SK-N-SH (cell line): ENCODE measurements at regions of chr11 and their contacts with region 1.

Region 1: GRCh38 chr11:117538263-117539135 is 210.8 kb downstream of the CEP164 start:
- DNase-seq: peak; percentile 76
- H3K4me3 ChIP-seq: no peak overlapping the region
- H3K27ac ChIP-seq: peak overlapping the region in 1 of 2 experiments; percentile 51; a peak in 2 of 4 replicates
- H3K4me1 ChIP-seq: peaks cover 0 to 24% of the 10 kb centered on the region in 2 experiments; a peak in 1 of 4 replicates
- H3K27me3 ChIP-seq: peaks cover 7% of the 10 kb centered on the region; the same call in 1 of the 2 replicates
- CTCF ChIP-seq: no peak
- EP300 ChIP-seq: no peak
- RAD21 ChIP-seq: no peak

Region 2: DNA sequence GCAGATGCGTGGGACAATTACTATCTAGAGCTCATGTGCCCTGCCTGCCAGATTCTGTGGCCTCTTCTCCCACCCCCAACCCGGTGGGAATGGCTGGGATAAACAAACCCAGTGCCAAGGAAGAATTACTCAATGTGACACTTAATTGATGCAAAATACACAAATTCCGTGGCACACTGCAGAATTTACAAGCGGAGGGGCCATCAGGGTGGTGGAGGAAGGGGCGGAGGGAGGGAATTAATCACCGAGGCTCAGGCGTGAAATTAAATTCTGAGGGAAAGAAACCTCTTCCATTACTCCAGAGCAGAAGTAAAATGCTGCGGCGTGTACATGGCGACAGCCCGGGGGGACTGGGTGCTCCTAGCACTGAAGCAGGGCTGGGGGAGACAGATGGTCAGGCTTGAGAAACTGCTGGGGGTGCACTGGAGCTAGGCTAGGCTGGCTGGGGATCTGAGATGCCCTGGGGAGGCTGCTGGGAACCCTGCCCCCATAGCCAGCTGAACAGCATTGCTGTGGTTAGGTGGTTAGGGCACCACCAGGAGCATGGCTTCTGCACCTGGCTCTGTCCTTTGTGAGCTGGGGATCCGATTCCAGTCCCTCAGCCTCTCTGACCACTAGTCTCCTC is 10.3 kb before region 1 on chr11:
- CTCF ChIA-PET with region 1: interaction called, 11 read pairs
- POLR2A ChIA-PET with region 1: no interaction called
- DNase-seq: peak; percentile 52
- H3K4me3 ChIP-seq: no peak overlapping the region
- H3K27ac ChIP-seq: no peak overlapping the region
- H3K4me1 ChIP-seq: peaks cover 0 to 32% of the 10 kb centered on the region in 2 experiments; a peak in 2 of 4 replicates
- H3K27me3 ChIP-seq: no peaks in the 10 kb centered on the region; the same call in 1 of the 2 replicates
- CTCF ChIP-seq: no peak
- EP300 ChIP-seq: no peak
- RAD21 ChIP-seq: no peak

Region 3: DNA sequence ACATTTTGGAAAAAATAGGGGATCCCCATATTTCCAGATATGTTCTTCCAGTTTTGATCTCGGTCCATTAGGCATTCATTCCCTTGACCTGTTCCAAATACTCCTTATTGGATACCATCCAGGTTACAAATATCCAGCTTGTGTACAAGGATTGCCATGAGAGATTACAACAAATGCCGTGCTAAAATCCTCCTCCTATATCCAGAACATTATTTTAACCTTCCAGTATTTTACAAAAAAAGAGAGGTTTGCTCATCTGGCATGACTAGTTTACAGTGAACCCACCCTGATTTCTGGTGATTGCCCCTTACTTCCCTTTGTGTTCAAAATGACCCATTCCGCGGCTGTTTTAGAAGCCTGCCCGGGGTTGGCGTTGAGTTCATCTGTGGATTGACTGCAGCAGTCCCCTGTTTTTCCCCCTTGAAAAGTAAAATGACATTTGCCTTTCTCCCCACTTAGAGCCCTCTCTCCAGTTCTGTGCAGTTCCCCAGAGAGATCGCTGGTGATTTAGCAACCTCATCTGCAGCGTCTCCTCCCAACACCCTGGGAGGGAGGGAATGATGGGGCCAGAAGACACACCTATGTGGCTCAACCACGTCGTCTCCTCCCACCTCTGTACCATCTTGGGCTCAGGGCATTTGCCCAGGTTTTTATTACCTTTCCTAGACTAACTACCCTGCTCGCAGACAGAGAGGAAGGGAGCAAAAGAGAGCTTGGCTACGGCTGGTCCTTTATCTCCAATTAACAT is 185.0 kb after region 1 on chr11:
- CTCF ChIA-PET with region 1: no interaction called
- POLR2A ChIA-PET with region 1: no interaction called
- DNase-seq: no peak
- H3K4me3 ChIP-seq: no peak overlapping the region
- H3K27ac ChIP-seq: peak overlapping the region in 1 of 2 experiments; percentile 88; a peak in 2 of 4 replicates
- H3K4me1 ChIP-seq: peaks cover 0 to 24% of the 10 kb centered on the region in 2 experiments; a peak in 2 of 4 replicates
- H3K27me3 ChIP-seq: 0 out of 2 replicates have a peak, but pooled peaks cover 4% of the 10 kb centered on the region
- CTCF ChIP-seq: no peak
- EP300 ChIP-seq: no peak
- RAD21 ChIP-seq: no peak